Activated T-helper 1 cell treated with anti-CD3 and anti-CD28 coated beads, Interleukin-12 subunit alpha, Interleukin-12 subunit beta, Interleukin-2, Interleukin-4 antibody, amounts not matched to agents 30 ng/mL and 10 ng/mL and 1 ng/mL, durations not matched to agents 14 hours and 24 hours and 36 hours (primary cell): ENCODE measurements at regions of chr2 and their contacts with region 1.

Region 1: DNA sequence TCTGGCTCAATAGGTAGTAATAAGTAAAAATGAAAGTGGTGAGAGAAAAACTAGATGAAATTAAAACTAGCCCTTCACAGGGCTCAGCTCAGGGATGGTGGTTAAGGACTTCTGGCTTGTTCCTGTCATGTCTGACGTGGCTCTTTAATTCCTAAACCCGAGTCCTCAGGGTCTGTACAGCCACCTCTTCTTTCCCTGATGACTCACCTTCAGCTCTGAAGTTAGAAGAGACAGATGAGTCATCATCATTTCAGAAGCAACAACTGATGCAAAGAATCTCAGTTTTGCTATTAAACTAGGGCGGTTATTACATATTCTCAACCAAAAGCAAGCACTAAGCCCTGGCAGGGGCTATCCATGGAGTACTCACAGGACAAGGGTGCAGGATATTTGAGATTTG is 24.0 kb upstream of the ITGB6 start:
- DNase-seq: peak; percentile 23
- H3K4me3 Mint-ChIP-seq: peak overlapping the region; percentile 39
- H3K27ac Mint-ChIP-seq: peak overlapping the region; percentile 32
- H3K4me1 Mint-ChIP-seq: peaks cover 56% of the 10 kb centered on the region
- H3K27me3 Mint-ChIP-seq: peaks cover 5% of the 10 kb centered on the region

Region 2: DNA sequence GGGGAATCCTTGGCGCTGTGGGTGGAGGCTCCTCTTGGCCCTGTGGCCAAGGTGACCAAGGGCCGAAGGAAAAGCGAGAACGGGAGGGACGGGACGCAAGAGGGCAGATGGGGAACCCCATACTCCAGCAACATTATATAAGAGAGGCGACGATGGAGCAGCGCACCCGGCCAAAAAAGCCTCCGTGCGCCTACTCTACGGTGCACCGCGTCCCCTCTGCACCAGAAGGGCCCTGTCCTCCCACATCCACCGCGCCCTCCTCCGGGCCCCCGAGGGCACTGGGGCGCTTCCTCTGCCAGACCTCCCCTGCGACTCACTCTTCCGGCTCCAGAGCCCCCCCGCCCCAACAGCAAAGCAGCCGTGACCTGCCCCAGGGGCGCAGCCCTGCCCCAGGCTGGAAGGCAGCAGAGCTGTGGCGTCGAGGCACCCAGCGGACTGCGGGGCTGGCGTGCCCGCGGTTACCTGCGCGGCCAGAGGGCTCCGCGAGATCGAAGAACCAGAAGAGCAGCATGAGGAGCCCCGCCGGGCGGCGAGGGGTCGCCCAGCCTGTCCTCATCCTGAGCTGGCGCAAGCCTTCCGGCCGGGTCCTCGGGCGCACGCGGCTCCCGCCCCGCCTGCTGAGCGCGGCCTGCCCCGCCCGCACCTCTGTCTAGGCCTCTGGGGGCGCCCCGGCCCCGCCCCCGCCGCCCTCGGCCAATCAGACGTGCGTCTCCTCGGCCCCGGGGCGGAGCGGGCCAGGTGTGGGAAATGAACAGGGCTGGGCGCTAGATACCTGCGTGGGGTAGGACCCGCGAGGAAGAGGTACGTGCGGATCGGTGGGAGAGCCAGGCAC is 319.7 kb before region 1 on chr2:
- intact Hi-C with region 1: loop called (anchors 5 kb)
- DNase-seq: peak; percentile 69
- H3K4me3 Mint-ChIP-seq: peak within 1 kb of the TSS; percentile 92
- H3K27ac Mint-ChIP-seq: peak within 1 kb of the TSS; percentile 91
- H3K4me1 Mint-ChIP-seq: peaks cover 41% of the 10 kb centered on the region
- H3K27me3 Mint-ChIP-seq: no peaks in the 10 kb centered on the region

Region 3: DNA sequence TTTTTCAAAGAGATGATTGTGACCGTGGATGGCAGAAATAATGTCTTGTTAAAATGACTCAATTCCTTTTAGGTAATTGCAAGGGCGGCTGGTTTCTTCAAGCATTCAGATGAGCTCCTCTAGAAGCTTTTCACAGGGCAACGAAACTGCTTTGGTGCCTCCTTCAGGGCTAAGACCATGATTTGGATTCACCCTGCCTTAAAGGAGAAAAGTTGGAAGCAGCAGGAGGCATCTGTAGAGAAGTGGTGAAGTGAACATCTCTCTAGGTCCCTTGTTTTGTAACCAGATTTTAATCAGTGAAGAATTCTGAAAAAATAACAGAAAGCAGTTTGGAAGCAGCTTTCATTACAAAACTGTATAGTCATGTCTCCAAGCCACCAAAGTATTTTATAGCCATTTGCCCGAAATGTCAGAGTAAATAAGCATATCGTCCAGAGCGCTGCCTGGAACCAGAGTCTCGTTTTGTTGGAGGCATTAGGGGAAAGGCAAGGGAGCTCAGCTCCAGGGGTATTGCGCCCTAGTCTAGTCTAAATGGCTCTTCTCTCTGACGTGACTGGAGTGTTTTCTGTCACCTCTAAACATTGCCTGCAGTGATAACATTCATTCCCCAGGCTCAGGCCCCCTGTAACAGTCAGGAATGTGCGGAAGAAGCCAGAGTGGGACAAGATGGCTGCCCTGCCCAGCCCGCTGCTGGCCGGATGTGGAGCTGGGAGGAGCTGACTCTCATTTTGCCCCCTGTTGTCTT is 33.9 kb after region 1 on chr2:
- intact Hi-C with region 1: no loop called
- DNase-seq: no peak
- H3K4me3 Mint-ChIP-seq: no peak overlapping the region
- H3K27ac Mint-ChIP-seq: no peak overlapping the region
- H3K4me1 Mint-ChIP-seq: no peaks in the 10 kb centered on the region
- H3K27me3 Mint-ChIP-seq: peaks cover 5% of the 10 kb centered on the region

Region 4: DNA sequence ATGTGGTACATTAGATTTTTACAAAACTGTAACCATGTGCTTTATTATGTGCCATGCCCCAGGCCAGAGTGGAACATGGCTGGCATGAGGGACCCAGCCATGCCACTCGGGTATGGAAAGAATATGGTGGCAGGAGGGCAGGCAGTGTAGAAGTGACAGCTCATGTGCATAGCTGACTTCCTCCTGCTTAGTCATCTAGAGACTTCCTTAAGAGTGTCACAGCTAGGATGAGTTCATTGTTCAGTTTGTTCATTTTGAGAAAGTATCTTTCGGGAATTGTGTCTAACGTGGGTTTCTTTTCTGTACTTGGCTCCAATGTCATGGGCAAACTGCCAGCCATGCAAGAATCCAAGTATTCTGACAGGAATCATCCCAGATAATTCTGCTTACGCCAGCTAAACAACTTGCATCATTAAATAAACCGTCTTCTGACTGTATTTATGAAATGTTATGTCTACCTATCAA is 70.3 kb after region 1 on chr2:
- intact Hi-C with region 1: loop called (anchors 1 kb)
- DNase-seq: no peak
- H3K4me3 Mint-ChIP-seq: no peak overlapping the region
- H3K27ac Mint-ChIP-seq: peak overlapping the region; percentile 1
- H3K4me1 Mint-ChIP-seq: peaks cover 72% of the 10 kb centered on the region
- H3K27me3 Mint-ChIP-seq: no peaks in the 10 kb centered on the region

Region 5: DNA sequence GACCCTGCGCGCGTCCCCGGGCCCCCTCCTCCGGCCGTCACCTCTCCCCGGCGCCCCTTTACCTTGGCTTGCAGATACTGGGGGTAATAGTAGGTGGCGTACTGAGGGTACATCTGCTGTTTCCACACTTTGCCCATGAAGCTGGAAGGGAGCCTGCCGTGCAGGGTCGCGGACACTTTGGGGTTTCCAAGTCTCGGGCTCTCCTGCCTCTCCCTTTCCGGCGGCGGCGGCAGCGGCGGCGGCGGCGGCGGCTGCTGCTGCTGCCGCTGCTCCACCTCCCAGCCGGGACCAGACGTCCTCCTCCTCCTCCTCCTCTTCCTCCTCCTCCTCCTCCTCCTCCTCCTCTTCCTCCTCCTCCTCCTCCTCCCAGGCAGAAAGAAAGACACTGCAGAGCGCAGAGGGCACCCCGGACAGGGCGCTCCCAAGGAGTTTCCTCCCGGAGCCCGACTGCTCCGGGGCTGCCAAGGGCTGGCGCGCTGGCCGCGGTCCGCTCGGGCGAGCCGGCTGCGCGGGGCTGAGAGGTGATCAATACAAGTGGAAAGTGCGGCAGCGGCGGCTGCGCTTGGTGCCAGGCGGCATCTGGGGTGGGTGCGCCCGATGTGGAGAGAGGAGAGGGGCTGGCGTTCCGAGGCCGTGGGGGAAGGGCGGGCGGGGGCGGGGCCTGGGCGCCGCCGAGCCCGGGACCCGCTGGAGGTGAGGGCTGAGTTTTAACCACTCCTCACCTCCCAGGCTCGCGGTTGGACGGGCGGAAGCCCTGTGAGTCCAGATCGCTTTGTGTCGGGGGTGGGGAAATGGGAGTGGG is 269.4 kb after region 1 on chr2 and contains the start of gene RBMS1:
- intact Hi-C with region 1: loop called (anchors 5 kb)
- DNase-seq: peak; percentile 35
- H3K4me3 Mint-ChIP-seq: peak within 1 kb of the TSS; percentile 97
- H3K27ac Mint-ChIP-seq: peak within 1 kb of the TSS; percentile 97
- H3K4me1 Mint-ChIP-seq: peaks cover 47% of the 10 kb centered on the region
- H3K27me3 Mint-ChIP-seq: peaks cover 9% of the 10 kb centered on the region
- total RNA-seq, gene RBMS1: 35.4 and 36.3 TPM in 2 replicates

Region 6: GRCh38 chr2:160994141-160995002 is 770.3 kb after region 1 on chr2:
- intact Hi-C with region 1: loop called (anchors 10 kb)
- DNase-seq: peak; percentile 57
- H3K4me3 Mint-ChIP-seq: no peak overlapping the region
- H3K27ac Mint-ChIP-seq: no peak overlapping the region
- H3K4me1 Mint-ChIP-seq: peaks cover 11% of the 10 kb centered on the region
- H3K27me3 Mint-ChIP-seq: peaks cover 2% of the 10 kb centered on the region